Activated CD4-positive, alpha-beta memory T cell treated with anti-CD3 and anti-CD28 coated beads for 36 hours (primary cell): ENCODE measurements at regions of chr2 and their contacts with region 1.

Region 1: GRCh38 chr2:143696651-143697050 is 567.4 kb downstream of the ARHGAP15 start:
- DNase-seq: no peak
- H3K4me3 Mint-ChIP-seq: no peak overlapping the region
- H3K27ac Mint-ChIP-seq: no peak overlapping the region
- H3K4me1 Mint-ChIP-seq: peaks cover 70% of the 10 kb centered on the region
- H3K27me3 Mint-ChIP-seq: no peaks in the 10 kb centered on the region

Region 2: GRCh38 chr2:143633419-143633818 is 63.2 kb before region 1 on chr2:
- CTCF ChIA-PET with region 1: no interaction called
- POLR2A ChIA-PET with region 1: no interaction called
- intact Hi-C with region 1: loop called (anchors 5 kb)
- DNase-seq: no peak
- H3K4me3 Mint-ChIP-seq: no peak overlapping the region
- H3K27ac Mint-ChIP-seq: no peak overlapping the region
- H3K4me1 Mint-ChIP-seq: peaks cover 13% of the 10 kb centered on the region
- H3K27me3 Mint-ChIP-seq: no peaks in the 10 kb centered on the region

Region 3: DNA sequence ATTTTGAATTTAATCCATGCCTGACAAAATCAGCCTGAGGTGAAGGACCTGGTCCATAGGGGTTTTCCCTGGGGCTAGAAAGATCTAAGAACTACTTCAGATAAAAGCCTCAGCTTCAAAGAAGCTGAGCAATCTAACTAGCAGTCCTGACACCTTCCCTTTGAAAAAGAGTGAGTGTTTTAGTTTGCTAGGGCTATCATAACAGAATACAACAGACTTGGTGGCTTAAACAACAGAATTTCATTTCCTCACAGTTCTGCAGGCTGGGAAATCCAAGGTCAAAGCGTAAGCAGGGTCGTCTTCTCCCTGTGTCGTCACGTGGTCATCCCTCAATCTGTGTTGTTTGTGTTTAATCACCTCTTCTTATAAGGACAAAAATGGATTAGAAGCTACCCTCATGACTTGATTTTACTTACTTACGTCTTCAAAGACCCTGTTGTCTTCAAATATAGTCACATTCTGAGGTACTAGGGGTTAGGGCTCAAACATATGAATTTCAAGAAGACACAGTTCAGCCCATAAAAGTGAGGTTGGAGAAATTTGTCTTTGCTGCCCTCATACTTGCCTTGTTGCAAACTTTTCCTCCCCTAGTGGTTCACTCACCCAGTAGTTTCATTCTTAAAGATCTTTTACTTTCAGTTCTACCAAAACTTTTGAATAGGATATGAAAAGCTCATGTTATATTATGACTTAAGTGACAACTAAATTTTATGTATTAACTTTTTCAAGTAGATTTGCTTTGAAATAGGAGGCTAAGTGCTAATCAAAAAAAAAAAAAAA is 106.4 kb after region 1 on chr2:
- CTCF ChIA-PET with region 1: no interaction called
- POLR2A ChIA-PET with region 1: no interaction called
- intact Hi-C with region 1: loop called (anchors 2 kb)
- DNase-seq: no peak
- H3K4me3 Mint-ChIP-seq: peak overlapping the region; percentile 27
- H3K27ac Mint-ChIP-seq: peak overlapping the region; percentile 73
- H3K4me1 Mint-ChIP-seq: peaks cover 17% of the 10 kb centered on the region
- H3K27me3 Mint-ChIP-seq: peaks cover 7% of the 10 kb centered on the region

Region 4: GRCh38 chr2:143891879-143892308 is 195.2 kb after region 1 on chr2:
- CTCF ChIA-PET with region 1: no interaction called
- POLR2A ChIA-PET with region 1: no interaction called
- intact Hi-C with region 1: no loop called
- DNase-seq: no peak
- H3K4me3 Mint-ChIP-seq: no peak overlapping the region
- H3K27ac Mint-ChIP-seq: no peak overlapping the region
- H3K4me1 Mint-ChIP-seq: no peaks in the 10 kb centered on the region
- H3K27me3 Mint-ChIP-seq: peaks cover 6% of the 10 kb centered on the region

Region 5: DNA sequence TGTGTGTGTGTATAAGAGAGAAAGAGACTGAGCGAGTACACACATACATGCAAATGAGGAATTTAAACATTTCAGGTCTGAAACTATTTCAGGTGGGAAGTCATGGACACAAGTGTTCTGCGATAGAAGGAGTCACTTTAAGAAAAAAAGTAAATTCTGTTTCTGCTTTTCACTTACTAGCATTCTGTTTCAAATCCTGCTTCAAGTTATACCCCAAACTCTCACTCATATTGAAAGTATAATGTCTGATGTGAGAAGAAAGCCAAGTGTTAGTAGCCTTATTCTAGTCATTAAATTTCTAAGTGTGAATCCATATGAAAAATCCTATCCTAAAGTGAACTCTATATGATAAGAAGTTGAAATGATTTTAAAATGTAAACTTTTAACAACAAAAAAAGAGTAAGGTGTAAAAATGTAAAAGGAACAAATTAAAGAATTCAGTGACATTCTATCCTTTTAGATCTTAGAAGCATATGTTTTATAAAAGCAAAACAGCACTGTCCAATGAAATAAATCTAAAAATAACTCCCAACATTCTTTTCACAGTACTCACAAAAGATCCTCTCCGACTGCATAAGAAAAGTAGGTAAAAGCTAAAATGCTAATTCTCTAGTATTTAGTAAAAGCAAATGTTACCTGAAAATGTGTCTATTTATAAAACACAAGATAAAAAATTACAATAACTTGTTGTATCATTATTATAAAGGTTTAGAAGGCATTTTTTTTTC is 252.6 kb after region 1 on chr2:
- CTCF ChIA-PET with region 1: no interaction called
- POLR2A ChIA-PET with region 1: no interaction called
- intact Hi-C with region 1: loop called (anchors 5 kb)
- DNase-seq: no peak
- H3K4me3 Mint-ChIP-seq: no peak overlapping the region
- H3K27ac Mint-ChIP-seq: no peak overlapping the region
- H3K4me1 Mint-ChIP-seq: peaks cover 2% of the 10 kb centered on the region
- H3K27me3 Mint-ChIP-seq: no peaks in the 10 kb centered on the region

Region 6: DNA sequence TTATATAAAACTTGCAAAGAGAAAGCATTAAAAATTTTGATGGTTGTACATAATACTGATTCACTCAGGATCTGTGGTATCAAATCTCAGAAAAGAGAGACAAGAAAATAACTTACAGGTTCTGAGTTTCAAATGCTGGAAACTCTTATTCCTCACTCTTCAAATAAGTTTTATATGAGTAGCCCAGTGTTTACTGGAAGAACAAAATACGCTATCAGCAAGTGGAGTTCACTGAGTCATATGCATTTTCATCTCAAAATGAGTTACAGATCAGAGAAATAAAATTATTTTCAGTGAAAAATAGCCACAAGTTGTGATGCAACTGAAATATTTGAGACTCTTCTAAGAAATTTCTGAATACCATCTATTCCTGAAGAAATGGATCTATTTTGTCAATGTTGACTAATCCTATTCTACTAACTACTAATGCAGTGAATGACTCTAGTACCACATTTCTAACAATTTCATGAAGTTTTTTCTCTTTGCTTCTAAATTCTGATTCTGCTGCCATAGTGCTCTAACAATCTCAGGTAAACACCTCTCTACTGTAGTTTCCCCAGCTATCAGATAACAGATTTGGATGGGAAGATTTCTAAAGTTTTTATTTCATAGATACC is 431.6 kb after region 1 on chr2:
- CTCF ChIA-PET with region 1: no interaction called
- POLR2A ChIA-PET with region 1: no interaction called
- intact Hi-C with region 1: loop called (anchors 5 kb)
- DNase-seq: no peak
- H3K4me3 Mint-ChIP-seq: no peak overlapping the region
- H3K27ac Mint-ChIP-seq: peak overlapping the region; percentile 24
- H3K4me1 Mint-ChIP-seq: peaks cover 28% of the 10 kb centered on the region
- H3K27me3 Mint-ChIP-seq: no peaks in the 10 kb centered on the region